ENCODE measurements at regions of chr19 and their contacts with region 1.

Region 1: GRCh38 chr19:35476149-35476548 is 14.1 kb downstream of the KRTDAP start:
- DNase-seq: no peak
- ATAC-seq: no peak
- H3K4me3 ChIP-seq: no peak overlapping the region
- H3K27ac ChIP-seq: no peak overlapping the region
- H3K4me1 ChIP-seq: no peaks in the 10 kb centered on the region
- H3K27me3 ChIP-seq: no peaks in the 10 kb centered on the region
- CTCF ChIP-seq: peak in 1 of 4 donors; percentile 11
- POLR2A ChIP-seq: no peak

Region 2: DNA sequence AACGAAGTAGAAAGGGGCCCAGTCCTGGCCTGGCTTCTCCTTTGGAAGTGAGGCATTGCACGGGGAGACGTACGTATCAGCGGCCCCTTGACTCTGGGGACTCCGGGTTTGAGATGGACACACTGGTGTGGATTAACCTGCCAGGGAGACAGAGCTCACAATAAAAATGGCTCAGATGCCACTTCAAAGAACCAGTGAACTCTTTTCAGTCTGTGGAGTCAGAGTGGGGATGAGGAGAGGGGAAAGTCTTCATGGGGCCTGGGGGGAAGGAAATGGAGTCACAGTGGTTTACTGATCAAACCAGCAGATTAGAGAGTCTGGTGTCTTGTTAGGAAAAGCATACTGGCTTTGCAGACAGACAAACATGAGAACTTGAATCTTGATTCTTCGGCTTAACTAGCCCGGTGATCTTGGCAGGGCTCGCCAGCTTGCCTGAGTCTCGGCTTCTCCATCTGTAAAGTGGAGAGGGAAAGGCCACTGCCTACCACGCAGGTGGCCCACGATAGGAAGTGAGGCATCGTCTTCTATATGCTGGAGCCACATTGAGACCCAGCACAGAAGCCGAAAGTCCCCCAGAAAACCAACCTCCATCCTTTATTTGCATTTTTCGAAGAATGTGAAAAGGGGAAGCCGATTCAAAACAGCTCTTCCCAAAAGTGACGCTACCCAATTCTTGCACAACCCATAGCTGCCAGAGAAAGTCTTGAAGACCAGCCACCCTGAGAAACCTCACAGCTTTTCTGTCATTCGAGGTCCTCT is 128.8 kb before region 1 on chr19 and contains the start of gene FFAR1:
- intact Hi-C with region 1: loop called in 1 of 2 experiments (anchors 10 kb)
- DNase-seq: peak in 2 of 3 donors; percentile 35 to 44
- ATAC-seq: peak in 3 of 4 donors; percentile 13 to 54 (median 40)
- H3K4me3 ChIP-seq: no peak within 1 kb of the TSS
- H3K27ac ChIP-seq: no peak within 1 kb of the TSS
- H3K4me1 ChIP-seq: no peaks in the 10 kb centered on the region
- H3K27me3 ChIP-seq: no peaks in the 10 kb centered on the region
- CTCF ChIP-seq: no peak
- POLR2A ChIP-seq: no peak
- total RNA-seq, gene FFAR1: not detected

Region 3: GRCh38 chr19:35417713-35418534 is 58.2 kb before region 1 on chr19:
- intact Hi-C with region 1: loop called in 1 of 2 experiments (anchors 10 kb)
- DNase-seq: no peak
- ATAC-seq: no peak
- H3K4me3 ChIP-seq: no peak overlapping the region
- H3K27ac ChIP-seq: no peak overlapping the region
- H3K4me1 ChIP-seq: peaks cover 0 to 8% (median 0%) of the 10 kb centered on the region in 4 donors
- H3K27me3 ChIP-seq: no peaks in the 10 kb centered on the region
- CTCF ChIP-seq: no peak
- POLR2A ChIP-seq: no peak